BJ (cell line): ENCODE measurements at regions of chr3 and their contacts with region 1.

Region 1: DNA sequence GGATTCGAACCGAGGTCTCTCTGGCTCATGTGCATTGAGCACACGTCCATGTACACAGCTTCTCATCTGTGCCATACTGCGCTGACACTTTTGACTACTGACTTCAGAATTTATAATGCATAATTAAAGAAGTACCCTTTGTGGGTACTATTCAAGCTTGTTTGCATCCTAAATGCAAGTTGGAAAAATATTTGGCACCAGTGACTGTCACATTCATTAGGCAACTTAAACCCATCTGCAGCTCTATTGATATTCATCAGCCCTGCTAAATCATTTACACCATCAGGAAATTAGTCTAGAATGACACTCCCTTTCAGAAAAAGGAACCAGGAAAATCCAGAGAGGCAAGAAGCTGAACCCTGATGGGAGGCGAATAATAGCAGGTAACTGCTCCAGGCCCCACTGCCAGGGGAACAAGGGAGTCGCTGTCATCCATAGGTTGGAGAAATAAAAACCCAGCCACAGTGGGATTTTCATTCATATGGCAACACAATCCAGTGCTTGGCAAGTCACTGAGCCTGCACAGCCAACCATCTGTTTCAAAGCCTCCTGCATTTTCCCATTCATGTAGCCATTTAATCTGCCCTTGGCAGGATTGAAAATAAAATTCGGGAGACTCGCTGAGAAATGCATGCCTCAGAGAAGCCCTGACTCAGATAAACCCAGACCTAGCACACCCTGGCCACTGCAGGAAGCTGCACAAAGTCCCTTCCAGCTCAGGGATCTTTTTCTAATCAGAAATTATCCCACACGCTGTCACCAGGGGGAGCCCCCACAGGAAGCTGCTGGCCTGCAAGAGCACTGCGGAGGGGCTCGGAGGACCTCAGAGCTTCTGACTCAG is 103.0 kb upstream of the VEPH1 start:
- DNase-seq: no peak
- H3K4me3 ChIP-seq: no peak overlapping the region
- H3K27me3 ChIP-seq: no peaks in the 10 kb centered on the region; the same call in 1 of the 2 replicates
- CTCF ChIP-seq: peak; percentile 90

Region 2: GRCh38 chr3:157594413-157594812 is 11.8 kb before region 1 on chr3:
- CTCF ChIA-PET with region 1: interaction called, 27 read pairs
- POLR2A ChIA-PET with region 1: no interaction called
- DNase-seq: no peak
- H3K4me3 ChIP-seq: no peak overlapping the region
- H3K27me3 ChIP-seq: peaks cover 4% of the 10 kb centered on the region; the same call in 1 of the 2 replicates
- CTCF ChIP-seq: peak; percentile 31

Region 3: DNA sequence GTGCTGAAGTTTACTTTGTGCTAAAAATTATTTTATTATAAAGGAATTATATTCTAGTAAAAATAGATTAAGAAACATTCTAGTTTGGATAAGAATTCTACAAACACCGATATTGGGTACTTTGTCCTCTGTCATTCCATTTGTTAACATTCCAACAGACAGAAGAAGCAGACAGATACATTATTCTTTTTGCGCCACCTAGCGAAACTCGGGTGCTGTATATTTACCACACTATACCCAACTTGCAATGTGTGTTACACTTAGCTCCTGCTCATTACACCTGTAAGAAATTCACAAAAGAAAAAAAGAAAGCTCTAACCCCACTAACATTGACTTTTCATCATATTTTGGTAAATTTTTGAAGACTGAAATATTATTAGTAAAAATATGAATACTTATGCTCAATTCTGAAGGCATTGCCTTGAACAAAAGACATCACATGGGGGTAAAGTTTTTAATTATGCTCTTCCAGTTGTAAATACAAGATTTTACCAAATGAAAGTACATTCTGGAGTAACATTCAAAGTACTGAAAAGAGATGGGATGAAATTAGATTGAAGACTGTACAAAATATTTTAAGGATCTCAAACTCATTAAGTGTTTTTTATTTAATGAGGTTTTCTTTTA is 828.3 kb after region 1 on chr3:
- CTCF ChIA-PET with region 1: interaction called, 16 read pairs
- POLR2A ChIA-PET with region 1: no interaction called
- DNase-seq: peak; percentile 16
- H3K4me3 ChIP-seq: no peak overlapping the region
- H3K27me3 ChIP-seq: no peaks in the 10 kb centered on the region
- CTCF ChIP-seq: peak; percentile 74

Region 4: DNA sequence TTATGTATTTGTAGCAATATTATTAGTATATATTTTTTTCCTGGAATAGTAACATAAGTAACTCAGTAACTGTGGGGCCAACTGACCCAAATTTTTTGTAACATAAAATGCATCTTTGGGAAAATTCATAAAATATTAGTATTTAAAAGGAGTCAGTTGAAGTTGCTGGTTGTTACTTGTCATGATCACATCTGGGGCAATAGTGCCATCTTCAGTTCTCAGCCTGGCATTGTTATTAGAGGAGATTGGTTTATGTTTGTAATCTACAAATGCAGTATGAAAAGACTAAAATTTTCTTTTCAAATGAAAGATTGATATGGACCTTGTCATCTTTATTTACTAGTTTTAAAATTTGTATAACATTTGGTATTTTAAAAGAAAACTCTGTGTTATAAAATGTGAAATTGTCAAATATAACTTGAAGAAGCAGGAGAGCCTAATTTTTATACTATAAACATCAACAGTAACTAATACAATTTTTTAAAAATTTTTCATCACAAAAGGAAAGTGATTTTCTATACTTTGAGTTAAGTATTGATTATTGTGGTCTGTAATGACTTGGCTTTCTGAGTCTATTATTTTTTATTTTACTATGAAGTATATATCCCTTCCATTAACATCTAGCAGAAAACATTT is 926.0 kb after region 1 on chr3:
- CTCF ChIA-PET with region 1: interaction called, 12 read pairs
- POLR2A ChIA-PET with region 1: no interaction called
- DNase-seq: peak; percentile 7
- H3K4me3 ChIP-seq: no peak overlapping the region
- H3K27me3 ChIP-seq: no peaks in the 10 kb centered on the region
- CTCF ChIP-seq: peak; percentile 63